ENCODE measurements at regions of chr11 and their contacts with region 1.

Region 1: GRCh38 chr11:85647604-85648299 is at the start of gene TMEM126A:
- DNase-seq: peak; percentile 77
- ATAC-seq: peak; percentile 99
- H3K4me3 Mint-ChIP-seq: peak within 1 kb of the TSS; percentile 98
- H3K27ac Mint-ChIP-seq: peak within 1 kb of the TSS; percentile 91
- H3K4me1 Mint-ChIP-seq: peaks cover 22% of the 10 kb centered on the region
- H3K27me3 Mint-ChIP-seq: peaks cover 10% of the 10 kb centered on the region
- CTCF ChIP-seq: no peak
- total RNA-seq, gene TMEM126A: 31.9 and 32.7 TPM in 2 replicates

Region 2: DNA sequence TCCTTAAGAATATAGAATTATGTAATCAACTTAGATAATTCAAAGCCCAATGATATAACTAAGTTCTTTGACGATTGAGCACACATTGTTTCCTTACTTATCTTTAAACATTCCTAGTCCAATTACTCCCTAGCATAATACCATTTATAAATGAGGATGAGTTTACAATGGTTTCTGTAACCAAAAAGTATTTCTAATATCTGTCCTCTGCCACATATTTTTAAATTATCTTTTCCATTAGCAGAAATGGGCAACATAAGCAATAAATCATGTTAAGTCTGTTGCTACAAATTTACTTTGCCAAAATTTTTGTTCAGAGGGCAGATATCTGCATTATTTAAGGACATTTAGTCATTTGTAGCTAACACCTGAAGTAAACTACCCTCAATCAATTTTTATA is 10.4 kb after region 1 on chr11:
- CTCF ChIA-PET with region 1: no interaction called
- POLR2A ChIA-PET with region 1: interaction called, 70 read pairs
- intact Hi-C with region 1: loop called (anchors 1 kb)
- DNase-seq: no peak
- ATAC-seq: no peak
- H3K4me3 Mint-ChIP-seq: no peak overlapping the region
- H3K27ac Mint-ChIP-seq: no peak overlapping the region
- H3K4me1 Mint-ChIP-seq: peaks cover 34% of the 10 kb centered on the region
- H3K27me3 Mint-ChIP-seq: no peaks in the 10 kb centered on the region
- CTCF ChIP-seq: no peak

Region 3: DNA sequence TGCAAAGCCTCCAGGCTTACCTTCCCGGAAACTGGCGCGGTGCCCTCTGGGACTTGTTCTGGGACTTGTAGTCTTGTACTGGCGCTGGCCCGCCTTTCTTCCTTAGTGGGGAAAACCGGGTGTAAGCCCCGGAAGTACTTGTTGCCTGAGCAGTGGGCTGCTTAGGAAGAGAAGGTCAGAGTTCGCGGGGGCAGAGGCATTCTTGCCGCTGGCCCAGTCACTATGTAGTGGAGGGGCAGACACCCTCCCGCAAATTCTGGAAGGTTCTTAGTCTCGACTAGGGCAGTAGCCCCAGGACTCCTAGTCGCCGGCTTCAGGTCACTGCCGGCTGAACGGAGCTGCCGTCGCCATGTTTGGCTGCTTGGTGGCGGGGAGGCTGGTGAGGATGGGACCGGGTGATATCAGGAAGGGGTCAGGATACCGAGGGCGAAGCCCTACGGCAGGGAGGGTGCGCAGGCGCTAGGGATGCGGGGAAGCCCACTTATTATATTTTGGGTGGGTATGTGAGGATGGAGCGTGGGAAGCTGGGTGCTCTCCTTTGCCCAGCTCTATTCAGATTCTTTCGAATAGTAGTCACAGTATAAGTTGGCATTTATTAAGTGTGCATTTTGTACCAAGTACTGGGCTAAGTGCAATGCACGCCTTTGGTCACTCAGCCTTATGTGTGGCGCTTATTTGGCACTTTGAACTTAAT is 654.5 kb after region 1 on chr11 and contains the start of gene HIKESHI:
- CTCF ChIA-PET with region 1: no interaction called
- POLR2A ChIA-PET with region 1: interaction called, 4 read pairs
- intact Hi-C with region 1: loop called (anchors 1 kb)
- DNase-seq: peak; percentile 72
- ATAC-seq: peak; percentile 98
- H3K4me3 Mint-ChIP-seq: peak within 1 kb of the TSS; percentile 99
- H3K27ac Mint-ChIP-seq: peak within 1 kb of the TSS; percentile 94
- H3K4me1 Mint-ChIP-seq: peaks cover 27% of the 10 kb centered on the region
- H3K27me3 Mint-ChIP-seq: no peaks in the 10 kb centered on the region
- CTCF ChIP-seq: no peak
- total RNA-seq, gene HIKESHI: 33.8 and 35.6 TPM in 2 replicates

Measured in activated B cell treated with CpG ODN at 0.5 μM for 24 hours (primary cell).